Activated B cell treated with CpG ODN at 0.5 μM for 24 hours (primary cell): ENCODE measurements at regions of chr12 and their contacts with region 1.

Region 1: DNA sequence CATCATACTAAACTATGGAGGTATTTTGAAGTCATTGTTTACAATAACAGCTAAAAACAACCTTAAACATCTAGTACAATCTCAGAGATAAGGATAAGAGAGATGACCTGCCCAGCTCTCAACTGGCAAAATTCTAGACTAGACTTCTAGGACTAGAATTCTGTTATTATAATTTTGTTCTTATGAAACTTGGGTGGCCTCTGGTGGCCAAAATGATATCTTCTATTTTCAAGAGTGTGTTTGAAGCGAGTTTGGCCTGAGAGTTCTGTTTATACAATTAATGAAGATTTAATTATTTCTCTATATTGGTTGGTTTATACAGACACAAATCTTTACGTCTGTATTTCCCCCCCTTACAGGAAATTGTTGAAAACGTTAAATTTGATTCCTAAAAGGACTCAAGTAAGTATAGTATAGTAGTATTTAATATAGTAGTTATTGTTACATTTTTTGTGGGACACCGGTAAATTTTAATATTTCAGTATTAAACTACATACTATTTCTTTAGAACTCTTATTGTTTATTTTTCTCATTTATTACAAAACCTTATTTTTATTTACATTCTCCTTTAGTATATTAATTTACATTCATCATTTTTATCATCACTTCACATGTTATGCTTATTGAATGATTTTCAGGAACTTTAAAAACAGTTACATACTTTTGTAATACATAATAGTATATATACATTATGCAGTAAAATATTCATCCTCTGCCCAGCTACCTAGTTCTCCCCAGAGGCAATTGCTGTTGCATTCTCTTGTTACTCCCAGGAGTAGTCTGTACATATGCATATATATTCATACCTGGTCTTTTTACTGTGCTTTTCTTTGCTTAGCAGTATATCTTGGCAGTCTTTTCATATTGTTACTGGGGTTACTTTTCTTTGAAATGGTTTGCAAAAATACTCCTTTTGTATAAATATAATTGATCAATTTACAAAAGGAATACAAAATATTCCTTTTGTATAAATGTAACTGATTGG is 6.6 kb downstream of the PPHLN1 start:
- DNase-seq: no peak
- ATAC-seq: peak; percentile 62
- H3K4me3 Mint-ChIP-seq: no peak overlapping the region
- H3K27ac Mint-ChIP-seq: no peak overlapping the region
- H3K4me1 Mint-ChIP-seq: peaks cover 62% of the 10 kb centered on the region
- H3K27me3 Mint-ChIP-seq: no peaks in the 10 kb centered on the region
- CTCF ChIP-seq: no peak

Region 2: DNA sequence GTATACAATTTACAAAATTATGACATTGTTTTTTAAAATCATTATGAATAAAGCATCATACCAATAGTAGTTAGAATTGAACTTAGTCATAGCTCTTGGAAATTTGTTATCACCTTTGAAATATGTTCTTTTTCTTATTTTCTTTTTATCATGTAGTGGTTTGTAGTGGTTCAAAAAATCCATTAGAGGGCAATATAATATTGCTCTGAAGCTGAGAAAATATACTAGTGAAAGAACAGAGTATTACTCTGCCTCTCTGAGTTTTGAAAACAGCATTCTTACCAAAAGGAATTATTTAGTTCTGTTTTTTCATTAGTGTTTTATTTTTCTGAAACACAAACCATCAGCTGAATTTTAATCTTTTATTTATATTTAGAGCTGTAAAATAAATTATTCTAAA is 1068.3 kb before region 1 on chr12:
- CTCF ChIA-PET with region 1: no interaction called
- POLR2A ChIA-PET with region 1: no interaction called
- intact Hi-C with region 1: loop called (anchors 5 kb)
- DNase-seq: no peak
- ATAC-seq: no peak
- H3K4me3 Mint-ChIP-seq: no peak overlapping the region
- H3K27ac Mint-ChIP-seq: no peak overlapping the region
- H3K4me1 Mint-ChIP-seq: no peaks in the 10 kb centered on the region
- H3K27me3 Mint-ChIP-seq: no peaks in the 10 kb centered on the region
- CTCF ChIP-seq: no peak

Region 3: DNA sequence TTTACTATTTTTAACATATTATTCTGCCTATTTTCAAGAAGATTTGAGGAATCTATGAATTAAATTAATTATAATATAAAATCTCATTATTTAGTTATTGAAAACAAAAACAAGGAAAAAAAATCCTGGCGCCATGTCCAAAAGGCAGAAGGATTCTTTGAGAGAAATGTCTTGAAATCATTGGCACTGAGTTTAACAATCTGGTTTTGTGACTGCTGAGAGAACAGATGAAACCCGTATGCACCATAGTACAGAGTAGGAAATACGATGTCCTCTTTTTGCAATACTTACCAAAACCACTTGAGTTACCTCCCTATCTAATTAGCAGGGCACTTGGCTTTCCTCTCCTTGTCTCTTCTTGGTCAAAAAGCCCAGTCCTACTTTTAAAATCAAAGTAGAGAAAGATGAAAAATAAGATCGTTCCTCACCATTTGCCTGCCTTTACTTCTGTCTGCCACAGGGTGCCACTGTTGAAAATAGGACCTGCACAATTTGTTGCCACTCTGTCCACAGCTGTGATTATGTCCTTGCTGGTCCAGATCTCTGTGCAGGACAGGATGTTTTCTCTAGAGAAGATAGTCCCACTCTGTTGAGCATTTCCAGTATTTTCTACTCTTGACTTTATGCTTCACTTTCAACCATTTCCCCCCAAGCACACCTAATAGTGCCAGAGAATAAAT is 964.7 kb before region 1 on chr12:
- CTCF ChIA-PET with region 1: no interaction called
- POLR2A ChIA-PET with region 1: no interaction called
- intact Hi-C with region 1: loop called (anchors 2 kb)
- DNase-seq: no peak
- ATAC-seq: no peak
- H3K4me3 Mint-ChIP-seq: no peak overlapping the region
- H3K27ac Mint-ChIP-seq: no peak overlapping the region
- H3K4me1 Mint-ChIP-seq: no peaks in the 10 kb centered on the region
- H3K27me3 Mint-ChIP-seq: no peaks in the 10 kb centered on the region
- CTCF ChIP-seq: no peak

Region 4: GRCh38 chr12:42023733-42024494 is 308.7 kb before region 1 on chr12:
- CTCF ChIA-PET with region 1: interaction called, 5 read pairs
- POLR2A ChIA-PET with region 1: no interaction called
- intact Hi-C with region 1: loop called (anchors 1 kb)
- DNase-seq: peak; percentile 58
- ATAC-seq: peak; percentile 82
- H3K4me3 Mint-ChIP-seq: peak overlapping the region; percentile 76
- H3K27ac Mint-ChIP-seq: no peak overlapping the region
- H3K4me1 Mint-ChIP-seq: peaks cover 6% of the 10 kb centered on the region
- H3K27me3 Mint-ChIP-seq: peaks cover 10% of the 10 kb centered on the region
- CTCF ChIP-seq: peak; percentile 100

Region 5: DNA sequence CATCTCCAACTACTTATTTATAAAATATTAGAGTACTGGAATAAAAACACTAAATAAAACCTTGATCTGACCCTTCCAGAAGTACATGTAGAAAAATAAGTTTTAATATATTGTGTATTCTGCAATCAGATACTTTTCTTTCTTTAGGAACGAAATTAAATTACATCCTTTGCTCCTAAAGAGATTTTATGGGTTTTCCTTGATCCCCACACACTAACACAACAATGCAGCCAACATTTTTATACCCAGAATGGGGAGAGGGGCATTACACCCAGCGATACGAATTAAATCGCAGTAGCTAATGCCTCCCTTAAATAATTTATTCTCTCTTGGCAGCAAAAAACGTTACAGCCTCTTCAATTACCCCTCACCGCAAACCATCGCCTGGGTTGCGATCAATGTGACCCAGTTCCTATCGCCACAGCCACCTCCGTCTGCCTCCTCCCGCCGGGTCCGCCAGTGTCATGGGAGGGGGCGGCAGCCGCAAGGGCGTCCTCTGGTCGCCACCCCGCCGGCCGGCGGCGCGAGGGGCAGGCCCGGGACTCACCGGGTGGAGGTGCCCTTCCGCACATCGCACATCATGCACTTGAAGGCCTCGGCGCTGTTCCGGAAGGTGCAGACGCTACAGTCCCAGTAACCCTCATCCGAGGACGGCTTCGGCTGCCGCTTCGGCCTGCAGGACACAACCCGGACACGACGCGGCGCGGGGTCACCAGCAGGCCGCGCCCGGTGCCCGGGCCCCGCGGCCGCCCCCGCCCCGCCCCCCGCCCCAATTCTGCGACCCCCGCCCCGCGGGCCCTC is 95.3 kb before region 1 on chr12:
- CTCF ChIA-PET with region 1: no interaction called
- POLR2A ChIA-PET with region 1: no interaction called
- intact Hi-C with region 1: loop called (anchors 1 kb)
- DNase-seq: peak; percentile 69
- ATAC-seq: peak; percentile 78
- H3K4me3 Mint-ChIP-seq: peak overlapping the region; percentile 93
- H3K27ac Mint-ChIP-seq: peak overlapping the region; percentile 92
- H3K4me1 Mint-ChIP-seq: peaks cover 37% of the 10 kb centered on the region
- H3K27me3 Mint-ChIP-seq: no peaks in the 10 kb centered on the region
- CTCF ChIP-seq: no peak